CD14-positive monocyte (primary cell): ENCODE measurements at regions of chrX and their contacts with region 1.

Region 1: GRCh38 chrX:23803931-23804381 is 21.0 kb downstream of the SAT1 start:
- DNase-seq: peak in 1 of 3 donors; percentile 25
- H3K4me3 ChIP-seq: peak overlapping the region in 1 of 3 experiments; percentile 23
- H3K4me3 Mint-ChIP-seq: no peak overlapping the region
- H3K27ac ChIP-seq: no peak overlapping the region
- H3K27ac Mint-ChIP-seq: peak overlapping the region in 4 of 7 donors; percentile 45 to 78 (median 50)
- H3K4me1 ChIP-seq: peaks cover 32 to 38% of the 10 kb centered on the region in 2 donors
- H3K4me1 Mint-ChIP-seq: peaks cover 32% of the 10 kb centered on the region
- H3K27me3 ChIP-seq: no peaks in the 10 kb centered on the region
- H3K27me3 Mint-ChIP-seq: peaks cover 0 to 12% (median 0%) of the 10 kb centered on the region in 3 donors
- CTCF ChIP-seq: no peak

Region 2: DNA sequence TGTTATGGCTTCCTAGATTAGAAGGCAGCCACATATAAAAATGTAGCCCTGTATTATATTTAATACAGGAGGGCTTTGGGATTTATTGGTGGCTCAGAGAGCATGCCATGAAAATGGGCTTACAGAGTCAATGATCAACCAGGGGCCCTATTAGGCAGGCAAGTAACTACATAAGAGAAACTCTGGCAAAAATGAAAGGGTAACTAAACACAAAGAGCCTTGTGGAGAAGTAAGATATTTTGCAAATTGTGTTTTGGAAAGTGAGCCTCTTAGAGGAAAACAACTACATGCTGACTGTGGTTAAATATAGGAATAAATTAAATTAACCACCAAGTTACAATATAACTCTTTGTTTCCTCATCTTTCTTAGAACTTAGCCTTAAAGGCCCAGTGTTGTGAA is 15.4 kb before region 1 on chrX:
- intact Hi-C with region 1: loop called in 1 of 2 experiments (anchors 2 kb)
- DNase-seq: no peak
- H3K4me3 ChIP-seq: no peak overlapping the region
- H3K4me3 Mint-ChIP-seq: no peak overlapping the region
- H3K27ac ChIP-seq: peak overlapping the region in 1 of 2 donors; percentile 47
- H3K27ac Mint-ChIP-seq: peak overlapping the region in 5 of 7 donors; percentile 24 to 86 (median 58)
- H3K4me1 ChIP-seq: peaks cover 20 to 29% of the 10 kb centered on the region in 2 donors
- H3K4me1 Mint-ChIP-seq: peaks cover 16% of the 10 kb centered on the region
- H3K27me3 ChIP-seq: no peaks in the 10 kb centered on the region
- H3K27me3 Mint-ChIP-seq: peaks cover 0 to 5% (median 0%) of the 10 kb centered on the region in 3 donors
- CTCF ChIP-seq: no peak